BJ (cell line): ENCODE measurements at regions of chr3 and their contacts with region 1.

Region 1: GRCh38 chr3:173553635-173554280 is 156.2 kb downstream of the NLGN1 start:
- DNase-seq: no peak
- H3K4me3 ChIP-seq: no peak overlapping the region
- H3K27me3 ChIP-seq: no peaks in the 10 kb centered on the region
- CTCF ChIP-seq: peak; percentile 82

Region 2: GRCh38 chr3:173135059-173135458 is 418.7 kb before region 1 on chr3:
- CTCF ChIA-PET with region 1: no interaction called
- POLR2A ChIA-PET with region 1: no interaction called
- DNase-seq: no peak
- H3K4me3 ChIP-seq: no peak overlapping the region
- H3K27me3 ChIP-seq: no peaks in the 10 kb centered on the region
- CTCF ChIP-seq: no peak

Region 3: GRCh38 chr3:173371848-173372487 is 181.8 kb before region 1 on chr3:
- CTCF ChIA-PET with region 1: interaction called, 11 read pairs
- POLR2A ChIA-PET with region 1: no interaction called
- DNase-seq: no peak
- H3K4me3 ChIP-seq: no peak overlapping the region
- H3K27me3 ChIP-seq: no peaks in the 10 kb centered on the region
- CTCF ChIP-seq: peak; percentile 75

Region 4: DNA sequence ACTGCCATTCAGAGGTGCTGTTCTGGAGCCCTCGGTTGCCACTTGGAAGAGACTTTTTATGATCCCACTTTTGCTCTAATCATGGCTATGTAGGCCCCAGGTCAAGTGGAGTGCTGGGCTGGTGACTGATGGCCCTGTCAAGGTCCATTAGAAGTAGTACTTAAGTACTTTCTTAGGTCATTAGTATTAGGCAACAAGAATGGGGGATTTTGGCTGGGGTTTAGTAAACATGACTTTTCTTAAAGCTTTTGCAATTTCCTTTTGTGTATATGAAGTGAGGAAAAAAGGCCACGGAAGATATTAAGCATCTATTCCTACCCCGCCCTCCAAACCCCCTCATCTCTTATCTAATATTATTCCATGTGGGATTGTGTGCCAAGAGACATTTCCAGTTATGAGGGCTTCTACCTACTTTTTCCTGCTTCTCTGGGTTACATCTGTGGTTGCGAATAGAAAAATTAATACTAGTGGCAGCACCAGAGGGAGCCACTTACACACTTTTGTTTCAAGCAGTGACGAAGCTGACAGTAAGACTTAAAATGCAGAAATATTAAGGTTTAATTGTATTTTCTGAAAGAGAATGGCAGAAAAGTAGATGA is 142.3 kb before region 1 on chr3:
- CTCF ChIA-PET with region 1: interaction called, 11 read pairs
- POLR2A ChIA-PET with region 1: no interaction called
- DNase-seq: no peak
- H3K4me3 ChIP-seq: no peak overlapping the region
- H3K27me3 ChIP-seq: no peaks in the 10 kb centered on the region
- CTCF ChIP-seq: peak; percentile 46